Dendritic cell treated with granulocyte-macrophage colony-stimulating factor and Interleukin-4, amounts not matched to agents 40 ng/mL and 50 ng/mL, for 4 days (primary cell): ENCODE measurements at regions of chr9 and their contacts with region 1.

Region 1: GRCh38 chr9:7799234-7799943 is at the start of gene DMAC1:
- H3K4me3 Mint-ChIP-seq: peak within 1 kb of the TSS; percentile 89
- H3K27ac Mint-ChIP-seq: peak within 1 kb of the TSS; percentile 91
- H3K4me1 Mint-ChIP-seq: peaks cover 12% of the 10 kb centered on the region
- H3K27me3 Mint-ChIP-seq: peaks cover 1% of the 10 kb centered on the region

Region 2: GRCh38 chr9:7935681-7936080 is 136.3 kb after region 1 on chr9:
- intact Hi-C with region 1: loop called (anchors 10 kb)
- H3K4me3 Mint-ChIP-seq: peak overlapping the region; percentile 37
- H3K27ac Mint-ChIP-seq: peak overlapping the region; percentile 83
- H3K4me1 Mint-ChIP-seq: peaks cover 16% of the 10 kb centered on the region
- H3K27me3 Mint-ChIP-seq: no peaks in the 10 kb centered on the region